ENCODE measurements at regions of chr11 and their contacts with region 1.

Region 1: DNA sequence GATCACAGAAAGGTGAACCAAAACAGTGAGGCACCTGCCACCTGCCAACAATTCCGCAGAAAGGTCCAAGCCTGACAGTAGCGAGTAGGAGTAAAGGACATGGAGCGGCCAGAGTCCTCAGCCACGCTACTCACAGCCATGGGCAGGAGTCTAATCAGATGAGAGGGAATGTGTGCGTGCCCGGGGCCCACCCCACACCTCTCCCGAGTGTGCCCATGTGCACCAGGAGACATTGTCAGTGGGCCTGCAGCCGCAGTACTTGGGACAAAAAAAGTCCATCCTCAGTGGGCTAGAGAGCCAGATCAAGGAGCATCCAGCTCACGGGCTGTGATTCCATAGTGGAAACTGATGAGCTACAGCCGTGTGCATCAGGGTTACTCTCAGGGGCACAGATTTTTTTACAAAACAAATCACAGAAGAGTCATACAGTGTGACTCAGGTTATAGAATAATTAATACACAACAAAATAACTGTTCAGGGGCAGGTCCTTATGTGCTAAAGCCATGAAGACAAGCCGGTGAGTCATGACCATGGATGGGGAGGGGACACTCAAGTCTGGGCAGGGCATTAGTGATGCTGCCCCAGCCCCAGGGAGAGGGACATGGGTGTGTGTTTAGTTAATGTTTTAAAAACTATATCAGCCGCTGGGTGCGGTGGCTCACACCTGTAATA is 12.0 kb downstream of the SART1 start:
- DNase-seq: no peak
- ATAC-seq: no peak
- H3K4me3 ChIP-seq: no peak overlapping the region
- H3K4me3 Mint-ChIP-seq: no peak overlapping the region
- H3K27ac ChIP-seq: no peak overlapping the region
- H3K27ac Mint-ChIP-seq: no peak overlapping the region
- H3K4me1 ChIP-seq: no peaks in the 10 kb centered on the region
- H3K4me1 Mint-ChIP-seq: no peaks in the 10 kb centered on the region
- H3K27me3 ChIP-seq: no peaks in the 10 kb centered on the region
- H3K27me3 Mint-ChIP-seq: no peaks in the 10 kb centered on the region
- CTCF ChIP-seq: no peak

Region 2: DNA sequence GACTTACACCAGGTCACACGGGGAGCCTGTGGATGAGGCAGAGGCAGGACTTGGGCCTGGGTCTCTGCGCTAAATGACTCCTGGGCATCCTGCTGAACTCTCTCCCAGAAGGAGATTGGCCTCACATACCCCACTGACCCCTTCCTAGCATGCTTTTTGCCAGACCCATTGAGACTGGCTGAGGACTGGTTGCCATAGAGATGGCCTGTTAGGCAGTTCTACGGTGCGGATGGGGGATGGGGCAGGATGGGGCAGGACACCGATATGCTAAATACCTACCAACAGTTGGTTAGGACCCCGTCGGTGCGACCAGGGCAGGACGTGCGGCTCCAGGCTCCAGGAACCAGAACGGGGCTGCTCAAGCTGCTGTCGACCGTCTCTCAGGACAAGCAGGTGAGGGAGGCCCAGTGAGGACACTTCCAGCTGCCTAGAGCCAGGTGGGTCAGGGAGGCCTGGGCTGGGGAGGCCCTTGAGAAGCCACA is 28.1 kb before region 1 on chr11 and contains the start of gene TSGA10IP:
- CTCF ChIA-PET with region 1: no interaction called
- POLR2A ChIA-PET with region 1: no interaction called
- intact Hi-C with region 1: loop called in 1 of 2 experiments (anchors 2 kb)
- DNase-seq: no peak
- ATAC-seq: no peak
- H3K4me3 ChIP-seq: no peak within 1 kb of the TSS
- H3K4me3 Mint-ChIP-seq: no peak within 1 kb of the TSS
- H3K27ac ChIP-seq: no peak within 1 kb of the TSS
- H3K27ac Mint-ChIP-seq: no peak within 1 kb of the TSS
- H3K4me1 ChIP-seq: peaks cover 2% of the 10 kb centered on the region
- H3K4me1 Mint-ChIP-seq: no peaks in the 10 kb centered on the region
- H3K27me3 ChIP-seq: no peaks in the 10 kb centered on the region
- H3K27me3 Mint-ChIP-seq: no peaks in the 10 kb centered on the region
- CTCF ChIP-seq: no peak
- total RNA-seq, gene TSGA10IP: not detected

Region 3: DNA sequence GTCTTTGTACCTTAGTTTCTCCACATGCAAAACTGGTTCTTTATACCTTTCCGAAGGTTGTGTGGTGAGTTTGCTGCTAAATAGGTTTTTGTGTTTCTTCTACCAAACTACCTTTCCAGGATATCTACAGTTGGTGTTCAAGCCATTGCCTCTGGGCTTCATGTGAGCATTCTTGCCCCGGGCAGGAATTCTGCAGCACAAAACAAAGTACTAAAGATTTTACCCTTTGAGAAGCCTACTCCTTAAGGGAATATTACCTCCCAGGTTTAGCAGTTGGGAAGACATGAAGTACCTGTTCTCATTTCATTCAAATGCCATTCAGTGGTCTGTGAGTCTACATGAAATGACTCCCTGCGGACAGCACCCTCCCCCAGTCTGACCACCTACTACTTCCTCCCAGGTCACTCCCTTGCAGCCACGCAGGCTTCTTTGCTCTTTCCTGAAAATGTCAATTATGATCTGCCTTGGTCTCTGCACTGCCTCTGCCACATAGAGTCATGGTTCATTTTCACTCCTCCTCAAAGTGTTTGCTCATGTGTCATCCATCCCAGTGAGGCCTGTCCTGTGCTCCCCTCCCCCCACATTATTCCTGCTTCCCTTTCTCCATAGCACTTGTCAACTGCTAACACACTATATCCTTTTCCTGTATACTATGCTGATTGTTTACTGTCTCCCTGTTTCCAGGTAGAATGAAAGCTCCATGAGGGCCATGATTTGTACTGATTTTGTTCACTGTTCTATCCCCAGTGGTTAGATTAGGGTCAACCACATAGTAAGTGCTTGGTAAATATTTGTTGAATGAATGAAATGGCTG is 133.4 kb after region 1 on chr11:
- CTCF ChIA-PET with region 1: no interaction called
- POLR2A ChIA-PET with region 1: no interaction called
- intact Hi-C with region 1: no loop called
- DNase-seq: no peak
- ATAC-seq: no peak
- H3K4me3 ChIP-seq: no peak overlapping the region
- H3K4me3 Mint-ChIP-seq: peak overlapping the region; percentile 30
- H3K27ac ChIP-seq: no peak overlapping the region
- H3K27ac Mint-ChIP-seq: peak overlapping the region; percentile 83
- H3K4me1 ChIP-seq: peaks cover 77% of the 10 kb centered on the region
- H3K4me1 Mint-ChIP-seq: peaks cover 82% of the 10 kb centered on the region
- H3K27me3 ChIP-seq: no peaks in the 10 kb centered on the region
- H3K27me3 Mint-ChIP-seq: no peaks in the 10 kb centered on the region
- CTCF ChIP-seq: no peak

Measured in CD4-positive, alpha-beta T cell (primary cell).